Activated CD8-positive, alpha-beta T cell treated with anti-CD3 and anti-CD28 coated beads, Interleukin-2, amount 10 ng/mL, durations not matched to agents 7 days and 5 days (primary cell): ENCODE measurements at regions of chr3 and their contacts with region 1.

Region 1: GRCh38 chr3:134600685-134601463 is 49.9 kb downstream of the KY start:
- DNase-seq: peak; percentile 69
- ATAC-seq: peak; percentile 89
- H3K4me3 Mint-ChIP-seq: no peak overlapping the region
- H3K27ac Mint-ChIP-seq: no peak overlapping the region
- H3K4me1 Mint-ChIP-seq: peaks cover 4% of the 10 kb centered on the region
- H3K27me3 Mint-ChIP-seq: no peaks in the 10 kb centered on the region

Region 2: GRCh38 chr3:134590766-134591165 is 10.1 kb before region 1 on chr3:
- CTCF ChIA-PET with region 1: interaction called, 12 read pairs
- POLR2A ChIA-PET with region 1: no interaction called
- DNase-seq: no peak
- ATAC-seq: no peak
- H3K4me3 Mint-ChIP-seq: no peak overlapping the region
- H3K27ac Mint-ChIP-seq: no peak overlapping the region
- H3K4me1 Mint-ChIP-seq: no peaks in the 10 kb centered on the region
- H3K27me3 Mint-ChIP-seq: peaks cover 7% of the 10 kb centered on the region

Region 3: GRCh38 chr3:134640872-134641470 is 40.1 kb after region 1 on chr3:
- CTCF ChIA-PET with region 1: interaction called, 10 read pairs
- POLR2A ChIA-PET with region 1: no interaction called
- DNase-seq: peak; percentile 28
- ATAC-seq: no peak
- H3K4me3 Mint-ChIP-seq: no peak overlapping the region
- H3K27ac Mint-ChIP-seq: no peak overlapping the region
- H3K4me1 Mint-ChIP-seq: no peaks in the 10 kb centered on the region
- H3K27me3 Mint-ChIP-seq: peaks cover 4% of the 10 kb centered on the region

Region 4: GRCh38 chr3:134754768-134755559 is 154.1 kb after region 1 on chr3:
- CTCF ChIA-PET with region 1: interaction called, 26 read pairs
- POLR2A ChIA-PET with region 1: no interaction called
- DNase-seq: peak; percentile 58
- ATAC-seq: peak; percentile 75
- H3K4me3 Mint-ChIP-seq: no peak overlapping the region
- H3K27ac Mint-ChIP-seq: no peak overlapping the region
- H3K4me1 Mint-ChIP-seq: no peaks in the 10 kb centered on the region
- H3K27me3 Mint-ChIP-seq: peaks cover 8% of the 10 kb centered on the region

Region 5: DNA sequence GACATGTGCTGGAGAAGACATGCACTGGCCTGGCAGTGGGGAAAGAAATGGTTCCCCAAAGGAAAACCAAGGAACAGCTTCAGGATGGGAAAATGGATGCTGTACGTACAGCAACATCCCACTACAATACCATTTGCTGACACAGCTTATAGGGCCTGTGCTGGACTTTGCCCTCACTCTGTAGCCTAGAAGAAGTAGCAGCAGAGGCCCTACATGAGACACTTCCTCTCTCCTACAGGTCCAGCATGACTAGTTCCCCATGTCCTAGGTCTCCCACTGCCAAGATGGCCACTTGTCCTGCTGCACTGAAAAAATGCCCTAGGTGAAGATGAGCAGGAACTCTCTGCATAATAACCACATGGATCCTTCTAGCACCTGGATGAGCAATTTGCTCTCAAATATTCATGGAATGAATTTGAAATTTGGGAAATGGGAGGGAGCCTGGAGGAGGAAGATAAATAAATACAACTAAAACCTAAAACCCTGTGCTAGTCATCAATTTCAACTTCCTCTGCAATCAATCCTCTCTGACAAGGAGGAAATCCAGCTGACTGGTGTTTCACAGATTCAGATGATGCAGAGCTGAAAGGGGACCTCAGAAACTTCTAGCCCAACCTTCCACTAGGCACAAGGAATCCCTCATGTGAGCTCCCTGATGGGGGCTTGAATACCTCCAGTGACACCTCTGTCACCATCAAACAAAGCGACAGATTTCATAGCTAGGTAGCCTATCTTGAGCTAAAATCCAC is 850.3 kb after region 1 on chr3:
- CTCF ChIA-PET with region 1: no interaction called
- POLR2A ChIA-PET with region 1: no interaction called
- DNase-seq: no peak
- ATAC-seq: no peak
- H3K4me3 Mint-ChIP-seq: no peak overlapping the region
- H3K27ac Mint-ChIP-seq: no peak overlapping the region
- H3K4me1 Mint-ChIP-seq: no peaks in the 10 kb centered on the region
- H3K27me3 Mint-ChIP-seq: no peaks in the 10 kb centered on the region